B cell (primary cell): ENCODE measurements at regions of chr4 and their contacts with region 1.

Region 1: GRCh38 chr4:2468445-2469192 is at the start of gene RNF4:
- DNase-seq: peak; percentile 96
- ATAC-seq: peak; percentile 85
- H3K4me3 ChIP-seq: peak within 1 kb of the TSS; percentile 77 to 99 (median 90)
- H3K4me3 Mint-ChIP-seq: peak within 1 kb of the TSS; percentile 99
- H3K27ac ChIP-seq: peak within 1 kb of the TSS; percentile 90 to 97
- H3K27ac Mint-ChIP-seq: peak within 1 kb of the TSS; percentile 99
- H3K4me1 ChIP-seq: peaks cover 31 to 33% of the 10 kb centered on the region in 2 donors
- H3K4me1 Mint-ChIP-seq: peaks cover 45% of the 10 kb centered on the region
- H3K27me3 ChIP-seq: no peaks in the 10 kb centered on the region
- H3K27me3 Mint-ChIP-seq: no peaks in the 10 kb centered on the region
- CTCF ChIP-seq: no peak
- total RNA-seq, gene RNF4: 95.2 and 104 TPM in 2 replicates

Region 2: GRCh38 chr4:1712216-1713002 is 756.2 kb before region 1 on chr4 and contains the start of gene SLBP:
- CTCF ChIA-PET with region 1: no interaction called
- POLR2A ChIA-PET with region 1: no interaction called
- intact Hi-C with region 1: loop called (anchors 5 kb)
- DNase-seq: peak; percentile 99
- ATAC-seq: peak; percentile 86
- H3K4me3 ChIP-seq: peak within 1 kb of the TSS; percentile 78 to 100 (median 96)
- H3K4me3 Mint-ChIP-seq: peak within 1 kb of the TSS; percentile 91
- H3K27ac ChIP-seq: peak within 1 kb of the TSS; percentile 83 to 99
- H3K27ac Mint-ChIP-seq: peak within 1 kb of the TSS; percentile 98
- H3K4me1 ChIP-seq: peaks cover 52 to 60% of the 10 kb centered on the region in 2 donors
- H3K4me1 Mint-ChIP-seq: peaks cover 66% of the 10 kb centered on the region
- H3K27me3 ChIP-seq: no peaks in the 10 kb centered on the region
- H3K27me3 Mint-ChIP-seq: no peaks in the 10 kb centered on the region
- CTCF ChIP-seq: no peak
- total RNA-seq, gene SLBP: 31.8 and 33.9 TPM in 2 replicates

Region 3: DNA sequence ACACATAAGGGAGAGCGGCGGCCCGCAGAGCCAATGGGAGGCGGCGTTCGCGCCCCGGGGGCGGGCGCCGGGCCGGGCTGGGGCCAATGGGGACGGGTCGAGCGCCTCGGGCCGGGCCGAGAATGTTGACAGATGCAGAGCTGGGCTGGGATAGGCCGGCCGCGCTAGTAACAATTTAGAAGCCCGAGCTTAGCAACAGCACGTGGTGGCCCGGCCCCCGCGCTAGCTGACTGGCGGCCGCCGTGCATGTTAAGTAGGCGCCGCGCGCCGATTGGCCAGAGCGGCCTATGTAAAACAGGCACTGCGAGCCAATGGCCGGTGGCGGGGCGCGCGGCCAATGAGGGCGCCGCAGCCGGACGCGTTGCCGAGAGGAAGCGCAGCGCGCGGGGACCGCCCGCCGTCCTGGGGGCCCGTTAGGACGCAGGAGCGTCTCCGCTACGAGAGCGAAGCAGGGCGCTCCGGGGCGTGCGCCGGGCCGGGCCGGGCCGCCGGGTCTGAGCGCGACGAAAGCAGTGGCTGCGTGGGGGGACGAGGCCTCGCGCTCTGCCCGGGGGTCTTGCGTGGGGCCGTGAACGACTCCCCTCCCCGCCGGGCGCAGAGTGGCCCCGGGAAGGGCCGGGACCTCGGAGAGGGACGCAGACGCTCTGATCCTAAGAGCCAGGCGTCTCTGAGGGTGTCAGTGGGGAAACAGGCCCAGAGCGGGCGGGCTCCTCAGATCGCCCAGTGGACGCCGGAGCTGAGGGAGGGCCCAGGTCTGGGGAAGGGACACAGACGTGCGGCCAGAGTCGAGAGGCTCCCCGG is 206.3 kb before region 1 on chr4:
- CTCF ChIA-PET with region 1: no interaction called
- POLR2A ChIA-PET with region 1: interaction called, 12 read pairs
- intact Hi-C with region 1: loop called (anchors 1 kb)
- DNase-seq: peak; percentile 99
- ATAC-seq: peak; percentile 87
- H3K4me3 ChIP-seq: peak overlapping the region in 4 of 5 experiments; percentile 63 to 80 (median 73)
- H3K4me3 Mint-ChIP-seq: peak overlapping the region; percentile 76
- H3K27ac ChIP-seq: peak overlapping the region; percentile 94 to 98
- H3K27ac Mint-ChIP-seq: peak overlapping the region; percentile 92
- H3K4me1 ChIP-seq: peaks cover 23 to 47% of the 10 kb centered on the region in 2 donors
- H3K4me1 Mint-ChIP-seq: peaks cover 20% of the 10 kb centered on the region
- H3K27me3 ChIP-seq: no peaks in the 10 kb centered on the region
- H3K27me3 Mint-ChIP-seq: no peaks in the 10 kb centered on the region
- CTCF ChIP-seq: no peak

Region 4: GRCh38 chr4:2418650-2419571 is 49.7 kb before region 1 on chr4 and contains the start of gene CFAP99:
- CTCF ChIA-PET with region 1: interaction called, 3 read pairs
- POLR2A ChIA-PET with region 1: no interaction called
- intact Hi-C with region 1: loop called (anchors 1 kb)
- DNase-seq: peak; percentile 99
- ATAC-seq: peak; percentile 92
- H3K4me3 ChIP-seq: peak within 1 kb of the TSS; percentile 2 to 72 (median 51)
- H3K4me3 Mint-ChIP-seq: peak within 1 kb of the TSS; percentile 89
- H3K27ac ChIP-seq: peak within 1 kb of the TSS; percentile 29 to 76
- H3K27ac Mint-ChIP-seq: peak within 1 kb of the TSS; percentile 89
- H3K4me1 ChIP-seq: peaks cover 34 to 38% of the 10 kb centered on the region in 2 donors
- H3K4me1 Mint-ChIP-seq: peaks cover 44% of the 10 kb centered on the region
- H3K27me3 ChIP-seq: peaks cover 0 to 64% (median 33%) of the 10 kb centered on the region in 4 experiments
- H3K27me3 Mint-ChIP-seq: peaks cover 40% of the 10 kb centered on the region
- CTCF ChIP-seq: peak; percentile 41
- total RNA-seq, gene CFAP99: not detected in 2 replicates

Region 5: DNA sequence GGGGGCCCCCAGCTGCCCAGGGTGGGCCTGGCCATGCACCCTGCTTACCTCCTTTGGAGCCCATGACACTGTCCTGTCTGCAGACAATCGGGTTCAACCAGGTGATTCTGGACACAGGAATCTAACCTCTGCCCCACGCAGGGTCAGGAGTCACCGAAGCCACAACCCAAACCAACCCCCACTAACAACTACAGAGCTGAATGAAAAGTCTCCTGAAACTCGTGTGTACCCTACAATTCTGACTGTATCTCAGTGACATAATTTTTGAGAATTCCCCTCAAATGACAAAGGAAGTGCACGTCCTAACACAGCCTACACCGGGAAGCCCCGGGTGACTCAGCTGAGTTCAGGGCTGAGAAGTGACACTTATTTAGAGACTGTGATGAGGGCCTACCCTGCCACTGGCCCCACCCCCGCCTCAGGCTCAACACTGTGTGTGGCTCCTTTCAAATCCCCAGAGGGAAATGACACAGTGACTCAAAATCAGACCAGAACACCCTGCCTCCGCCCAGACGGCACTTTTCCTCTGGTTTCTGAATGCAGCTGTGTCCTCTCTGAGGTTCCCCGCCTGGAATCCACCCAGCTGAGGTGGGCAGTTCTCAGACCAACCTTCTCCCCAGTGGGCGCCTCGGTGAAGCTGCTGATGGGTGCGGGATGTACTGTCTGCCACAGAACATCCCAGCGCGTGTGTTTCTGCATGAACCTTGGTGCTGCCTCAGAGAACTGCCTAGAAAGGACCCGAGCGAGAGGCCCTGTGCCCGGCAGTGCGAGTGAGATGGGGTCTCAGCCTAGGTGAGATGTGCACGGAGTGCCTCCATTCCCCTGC is 277.6 kb after region 1 on chr4:
- CTCF ChIA-PET with region 1: no interaction called
- POLR2A ChIA-PET with region 1: no interaction called
- intact Hi-C with region 1: loop called (anchors 5 kb)
- DNase-seq: peak; percentile 95
- ATAC-seq: peak; percentile 96
- H3K4me3 ChIP-seq: peak overlapping the region in 2 of 5 experiments; percentile 5 to 17
- H3K4me3 Mint-ChIP-seq: peak overlapping the region; percentile 70
- H3K27ac ChIP-seq: peak overlapping the region; percentile 93 to 95
- H3K27ac Mint-ChIP-seq: peak overlapping the region; percentile 93
- H3K4me1 ChIP-seq: peaks cover 30 to 44% of the 10 kb centered on the region in 2 donors
- H3K4me1 Mint-ChIP-seq: peaks cover 46% of the 10 kb centered on the region
- H3K27me3 ChIP-seq: no peaks in the 10 kb centered on the region
- H3K27me3 Mint-ChIP-seq: no peaks in the 10 kb centered on the region
- CTCF ChIP-seq: no peak